Natural killer cell (primary cell): ENCODE measurements at regions of chr1 and their contacts with region 1.

Region 1: DNA sequence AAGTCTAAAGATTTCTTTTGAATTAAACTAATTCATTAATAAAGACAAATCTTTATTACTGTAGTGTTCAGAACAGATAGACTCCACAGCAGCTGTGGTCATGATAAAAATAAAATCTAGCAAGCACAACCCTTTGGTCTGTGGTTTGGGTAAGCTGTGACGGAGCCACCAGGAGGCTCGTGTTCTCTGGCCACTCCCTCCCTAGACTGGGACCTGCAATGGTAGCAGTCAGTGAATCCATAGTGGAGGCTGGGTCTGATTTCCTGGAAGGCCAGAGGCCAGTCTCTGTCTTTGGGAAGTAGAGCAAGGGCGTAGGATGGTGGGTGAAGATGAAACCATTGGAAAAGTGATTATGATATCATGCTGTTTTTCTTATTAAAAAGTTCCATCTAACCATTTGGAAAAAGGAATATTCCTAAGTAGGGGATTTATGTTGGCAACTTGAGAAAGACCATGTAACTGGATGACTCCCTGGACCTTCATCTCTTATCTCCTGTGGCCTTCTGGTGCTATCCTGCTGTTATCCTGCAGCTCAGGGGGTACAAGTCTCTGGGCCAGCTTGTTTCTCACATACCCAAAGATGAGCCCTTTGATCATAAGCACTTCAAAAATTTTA is 39.0 kb downstream of the TENT5C start:
- DNase-seq: peak; percentile 46 to 62
- ATAC-seq: peak; percentile 83 to 99 (median 97)
- H3K4me3 ChIP-seq: no peak overlapping the region
- H3K4me3 Mint-ChIP-seq: peak overlapping the region; percentile 67
- H3K27ac ChIP-seq: no peak overlapping the region
- H3K27ac Mint-ChIP-seq: peak overlapping the region; percentile 37 to 75
- H3K4me1 ChIP-seq: peaks cover 12% of the 10 kb centered on the region
- H3K4me1 Mint-ChIP-seq: peaks cover 16 to 18% of the 10 kb centered on the region in 2 donors
- H3K27me3 ChIP-seq: peaks cover 3% of the 10 kb centered on the region
- H3K27me3 Mint-ChIP-seq: peaks cover 30 to 37% of the 10 kb centered on the region in 2 donors
- CTCF ChIP-seq: no peak

Region 2: DNA sequence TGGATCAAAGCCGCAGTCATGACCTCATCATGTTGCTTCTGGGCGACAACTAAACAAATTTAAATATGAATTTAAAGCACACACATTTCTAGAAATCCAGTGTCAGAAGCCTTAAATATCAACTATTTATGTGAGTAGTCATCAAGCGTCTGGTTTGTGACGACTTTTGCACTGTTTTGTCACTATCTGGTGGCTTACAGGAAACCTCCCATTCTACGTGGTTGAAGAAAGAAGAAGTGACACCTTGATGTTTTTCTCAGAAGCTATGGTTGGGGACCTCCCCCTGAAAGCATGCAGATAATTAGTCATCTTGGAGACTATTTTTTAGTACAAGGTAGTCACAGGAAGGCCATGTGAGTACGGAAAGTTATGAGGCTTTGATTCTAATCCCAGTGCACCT is 19.5 kb after region 1 on chr1:
- intact Hi-C with region 1: loop called (anchors 1 kb)
- DNase-seq: peak in 1 of 2 donors; percentile 93
- ATAC-seq: peak; percentile 84 to 91 (median 89)
- H3K4me3 ChIP-seq: no peak overlapping the region
- H3K4me3 Mint-ChIP-seq: peak overlapping the region; percentile 79
- H3K27ac ChIP-seq: peak overlapping the region; percentile 88
- H3K27ac Mint-ChIP-seq: peak overlapping the region; percentile 94 to 97
- H3K4me1 ChIP-seq: peaks cover 62% of the 10 kb centered on the region
- H3K4me1 Mint-ChIP-seq: peaks cover 65 to 67% of the 10 kb centered on the region in 2 donors
- H3K27me3 ChIP-seq: no peaks in the 10 kb centered on the region
- H3K27me3 Mint-ChIP-seq: peaks cover 0 to 3% of the 10 kb centered on the region in 2 donors
- CTCF ChIP-seq: no peak

Region 3: GRCh38 chr1:117795190-117795589 is 150.4 kb after region 1 on chr1:
- intact Hi-C with region 1: no loop called
- DNase-seq: no peak
- ATAC-seq: no peak
- H3K4me3 ChIP-seq: no peak overlapping the region
- H3K4me3 Mint-ChIP-seq: no peak overlapping the region
- H3K27ac ChIP-seq: no peak overlapping the region
- H3K27ac Mint-ChIP-seq: no peak overlapping the region
- H3K4me1 ChIP-seq: no peaks in the 10 kb centered on the region
- H3K4me1 Mint-ChIP-seq: no peaks in the 10 kb centered on the region
- H3K27me3 ChIP-seq: no peaks in the 10 kb centered on the region
- H3K27me3 Mint-ChIP-seq: peaks cover 22 to 23% of the 10 kb centered on the region in 2 donors
- CTCF ChIP-seq: no peak